Prostate gland (tissue), 2 donors: ENCODE measurements at regions of chr5 and their contacts with region 1.

Region 1: DNA sequence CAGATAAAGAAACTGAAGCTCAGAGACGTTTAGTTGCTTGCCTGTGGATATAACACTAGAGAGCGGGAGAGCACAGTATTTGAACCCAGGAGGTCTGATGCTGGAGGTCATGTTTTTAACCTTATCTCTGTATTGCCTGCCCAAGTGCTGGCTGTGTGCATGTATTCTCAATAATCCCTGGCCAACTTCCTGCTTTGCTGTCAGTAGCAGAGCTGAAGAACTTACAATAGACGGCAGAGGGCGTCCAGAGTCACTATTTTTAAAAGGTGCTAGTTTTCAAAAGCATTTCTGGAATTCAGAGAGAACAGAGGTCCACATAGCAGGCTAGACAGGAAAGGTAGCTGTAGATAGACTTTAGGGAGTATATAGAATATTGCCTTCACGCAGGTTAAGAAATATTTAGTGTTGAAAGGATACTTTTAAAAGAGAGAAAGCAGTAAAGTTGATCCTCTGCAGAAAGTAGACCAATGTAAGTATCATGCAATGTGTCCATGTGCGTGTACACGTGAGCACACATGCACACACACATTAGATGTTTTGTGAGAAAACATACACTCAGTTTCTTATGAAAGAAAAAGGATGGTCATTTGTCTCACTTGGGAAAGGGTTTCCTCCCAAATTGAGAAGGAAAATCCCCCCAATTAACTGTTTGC is 46.3 kb downstream of the PTCD2 start:
- DNase-seq: peak; percentile 79
- H3K4me3 ChIP-seq: no peak overlapping the region
- H3K27ac ChIP-seq: no peak overlapping the region
- H3K4me1 ChIP-seq: peaks cover 3% of the 10 kb centered on the region
- H3K27me3 ChIP-seq: no peaks in the 10 kb centered on the region
- CTCF ChIP-seq: peak; percentile 34 to 84 (median 74)
- POLR2A ChIP-seq: no peak

Region 2: GRCh38 chr5:71922584-71923106 is 443.8 kb before region 1 on chr5:
- intact Hi-C with region 1: no loop called
- DNase-seq: no peak
- H3K4me3 ChIP-seq: no peak overlapping the region
- H3K27ac ChIP-seq: no peak overlapping the region
- H3K4me1 ChIP-seq: no peaks in the 10 kb centered on the region
- H3K27me3 ChIP-seq: no peaks in the 10 kb centered on the region
- CTCF ChIP-seq: peak in 1 of 4 experiments; percentile 18
- POLR2A ChIP-seq: no peak

Region 3: GRCh38 chr5:72224946-72225463 is 141.4 kb before region 1 on chr5:
- intact Hi-C with region 1: no loop called
- DNase-seq: no peak
- H3K4me3 ChIP-seq: no peak overlapping the region
- H3K27ac ChIP-seq: no peak overlapping the region
- H3K4me1 ChIP-seq: no peaks in the 10 kb centered on the region
- H3K27me3 ChIP-seq: no peaks in the 10 kb centered on the region
- CTCF ChIP-seq: no peak
- POLR2A ChIP-seq: no peak

Region 4: GRCh38 chr5:72523960-72524582 is 157.6 kb after region 1 on chr5:
- intact Hi-C with region 1: loop called (anchors 2 kb)
- DNase-seq: peak; percentile 46
- H3K4me3 ChIP-seq: no peak overlapping the region
- H3K27ac ChIP-seq: no peak overlapping the region
- H3K4me1 ChIP-seq: no peaks in the 10 kb centered on the region
- H3K27me3 ChIP-seq: no peaks in the 10 kb centered on the region
- CTCF ChIP-seq: peak in 3 of 4 experiments; percentile 52 to 79 (median 69)
- POLR2A ChIP-seq: no peak

Region 5: DNA sequence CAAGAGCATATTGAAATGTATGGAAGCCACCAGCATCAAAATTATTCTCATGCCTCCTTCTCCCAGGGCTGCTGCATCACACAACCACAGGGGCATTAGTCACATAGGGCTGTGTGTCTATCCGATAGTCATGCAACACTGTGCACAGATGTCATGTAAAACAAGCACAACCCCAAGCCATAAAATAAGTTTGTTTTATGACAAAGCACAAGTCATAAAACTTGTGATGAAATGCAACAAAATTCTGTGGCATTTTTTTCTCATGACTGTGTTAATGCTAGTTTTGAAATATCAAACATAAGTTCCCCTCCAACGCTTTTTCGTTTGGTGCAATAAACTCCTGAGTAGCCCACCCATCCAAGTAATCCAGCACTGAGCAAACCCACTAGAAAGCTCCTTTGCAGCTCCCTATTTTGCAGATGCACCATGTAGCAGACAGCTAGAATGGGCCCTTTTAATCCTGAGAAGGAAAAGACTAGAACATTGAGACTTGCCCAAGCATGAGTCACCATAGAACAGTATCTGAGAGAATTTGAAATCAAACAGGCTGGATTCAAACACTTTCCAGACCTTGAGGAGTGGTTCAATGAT is 234.0 kb after region 1 on chr5:
- intact Hi-C with region 1: loop called (anchors 10 kb)
- DNase-seq: no peak
- H3K4me3 ChIP-seq: no peak overlapping the region
- H3K27ac ChIP-seq: no peak overlapping the region
- H3K4me1 ChIP-seq: no peaks in the 10 kb centered on the region
- H3K27me3 ChIP-seq: no peaks in the 10 kb centered on the region
- CTCF ChIP-seq: no peak
- POLR2A ChIP-seq: no peak

Region 6: GRCh38 chr5:72816311-72817145 is 450.1 kb after region 1 on chr5 and contains the start of gene TNPO1:
- intact Hi-C with region 1: loop called (anchors 5 kb)
- DNase-seq: peak; percentile 93
- H3K4me3 ChIP-seq: peak within 1 kb of the TSS; percentile 70 to 79
- H3K27ac ChIP-seq: peak within 1 kb of the TSS; percentile 94 to 96
- H3K4me1 ChIP-seq: no peaks in the 10 kb centered on the region
- H3K27me3 ChIP-seq: no peaks in the 10 kb centered on the region
- CTCF ChIP-seq: peak in 2 of 4 experiments; percentile 10 to 17
- POLR2A ChIP-seq: peak; percentile 99
- total RNA-seq, gene TNPO1: 107 to 113 TPM